ENCODE measurements at regions of chr4 and their contacts with region 1.

Region 1: DNA sequence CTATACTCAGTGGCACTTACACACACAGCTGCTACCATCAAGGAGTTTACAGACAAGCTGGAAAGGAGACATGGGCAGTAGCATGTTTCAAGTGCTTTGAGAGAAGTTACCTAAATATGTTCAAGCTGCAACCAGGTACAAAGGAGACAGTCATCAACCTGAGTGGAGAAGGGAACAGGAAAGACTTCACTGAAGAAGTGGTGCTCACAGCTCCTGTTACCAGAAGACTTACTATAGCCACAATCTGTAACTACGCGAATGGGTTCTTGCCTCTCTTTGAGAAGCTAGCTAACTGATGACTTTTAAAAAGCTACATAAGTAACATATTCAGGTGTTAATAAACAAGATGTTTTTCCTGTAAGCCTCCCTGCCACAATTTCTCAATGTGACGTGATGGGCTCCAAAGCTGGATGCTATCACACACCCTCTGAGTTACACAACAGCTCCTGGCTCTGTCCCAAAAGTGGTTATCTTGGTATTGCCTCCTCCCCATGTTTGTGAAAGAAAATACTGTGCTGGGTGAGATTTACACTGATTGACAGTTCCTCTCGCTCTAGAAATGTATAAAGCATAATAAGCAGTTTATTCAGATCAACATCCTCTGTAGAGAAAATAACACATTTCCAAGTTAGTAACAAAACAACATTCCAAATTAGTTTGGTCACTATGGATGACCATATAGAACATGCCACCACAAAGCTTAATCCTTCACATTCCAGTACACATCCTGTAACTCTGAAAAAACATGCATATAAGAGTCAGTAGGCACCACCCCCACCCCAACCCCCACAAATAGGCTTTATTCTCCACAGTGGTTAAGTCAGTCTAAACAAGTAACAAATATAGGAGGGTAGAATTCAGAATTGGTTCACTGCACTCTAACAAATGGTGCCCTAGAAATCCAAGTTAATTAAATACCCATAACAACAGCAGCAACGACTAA is 81.8 kb downstream of the FRYL start:
- DNase-seq: no peak
- H3K4me3 Mint-ChIP-seq: no peak overlapping the region
- H3K27ac Mint-ChIP-seq: no peak overlapping the region
- H3K4me1 Mint-ChIP-seq: peaks cover 23% of the 10 kb centered on the region
- H3K27me3 Mint-ChIP-seq: no peaks in the 10 kb centered on the region

Region 2: DNA sequence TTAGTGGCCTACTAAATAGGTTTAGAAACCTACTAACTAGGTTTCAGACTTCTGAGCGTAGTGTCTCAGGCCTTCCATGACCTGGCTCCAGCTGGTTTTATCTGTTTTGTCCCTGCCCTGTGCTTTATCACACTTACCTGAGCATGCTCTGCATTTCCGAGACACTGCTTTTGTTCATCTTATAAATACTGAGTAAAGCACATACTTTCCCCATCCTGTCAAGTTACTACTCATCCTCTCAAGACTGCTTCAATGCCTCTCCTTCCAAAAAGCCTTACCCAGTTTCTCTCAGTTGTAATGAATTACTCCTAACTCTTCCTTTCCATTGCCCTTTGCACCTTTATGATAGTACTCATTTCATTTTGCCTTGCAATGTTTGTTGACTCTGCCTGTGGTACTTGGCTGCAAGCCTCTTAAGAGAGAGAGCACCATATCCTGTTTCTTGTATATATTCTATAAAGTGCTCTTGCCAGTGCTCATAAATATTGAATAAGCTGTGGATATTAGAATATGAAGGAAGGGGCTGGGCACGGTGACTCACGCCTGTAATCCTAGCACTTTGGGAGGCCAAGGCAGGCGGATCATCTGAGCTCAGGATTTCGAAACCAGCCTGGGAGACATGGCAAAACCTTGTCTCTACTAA is 322.5 kb before region 1 on chr4:
- intact Hi-C with region 1: no loop called
- DNase-seq: no peak
- H3K4me3 Mint-ChIP-seq: no peak overlapping the region
- H3K27ac Mint-ChIP-seq: no peak overlapping the region
- H3K4me1 Mint-ChIP-seq: peaks cover 7% of the 10 kb centered on the region
- H3K27me3 Mint-ChIP-seq: no peaks in the 10 kb centered on the region

Region 3: DNA sequence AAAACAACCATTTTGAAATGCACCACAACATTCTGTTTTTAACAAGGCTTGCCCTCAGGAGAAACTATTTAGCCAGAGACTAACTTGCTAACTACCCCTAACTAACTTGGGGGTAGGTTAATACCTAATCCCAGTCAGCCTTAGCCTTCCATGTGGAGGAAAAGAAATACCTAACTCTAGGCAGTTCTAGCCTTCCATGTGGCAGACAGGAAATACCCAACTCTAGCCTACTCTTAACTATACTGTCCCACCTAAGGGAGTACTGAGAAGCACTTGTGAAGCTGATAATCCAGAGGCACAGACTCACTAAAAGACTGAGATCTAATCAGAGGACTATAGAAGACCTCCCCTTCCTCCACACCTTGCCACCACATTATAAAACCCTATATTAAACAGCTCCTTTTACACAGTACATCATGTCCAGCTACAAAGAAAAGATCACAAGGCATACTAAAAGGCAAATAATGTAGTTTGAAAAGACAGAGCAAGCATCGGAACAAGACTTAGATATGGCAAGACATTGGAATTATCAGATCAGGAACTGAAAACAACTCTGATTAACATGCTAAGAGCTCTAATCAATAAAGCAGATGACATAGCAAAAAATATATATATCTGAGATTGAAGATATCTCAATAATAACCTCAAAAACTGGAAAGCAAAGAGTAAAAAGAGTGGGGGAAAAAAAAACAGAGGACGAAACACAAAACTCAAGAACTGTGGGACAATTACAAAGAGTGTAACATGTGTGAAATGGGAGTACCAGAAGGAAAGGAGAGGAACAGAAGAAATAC is 29.6 kb after region 1 on chr4:
- intact Hi-C with region 1: loop called (anchors 1 kb)
- DNase-seq: no peak
- H3K4me3 Mint-ChIP-seq: no peak overlapping the region
- H3K27ac Mint-ChIP-seq: no peak overlapping the region
- H3K4me1 Mint-ChIP-seq: peaks cover 68% of the 10 kb centered on the region
- H3K27me3 Mint-ChIP-seq: no peaks in the 10 kb centered on the region

Measured in activated CD4-positive, alpha-beta T cell treated with anti-CD3 and anti-CD28 coated beads, Interleukin-2, amount 10 ng/mL, durations not matched to agents 24 days and 14 days (primary cell).